CD4-positive, alpha-beta memory T cell (primary cell): ENCODE measurements at regions of chr13 and their contacts with region 1.

Region 1: DNA sequence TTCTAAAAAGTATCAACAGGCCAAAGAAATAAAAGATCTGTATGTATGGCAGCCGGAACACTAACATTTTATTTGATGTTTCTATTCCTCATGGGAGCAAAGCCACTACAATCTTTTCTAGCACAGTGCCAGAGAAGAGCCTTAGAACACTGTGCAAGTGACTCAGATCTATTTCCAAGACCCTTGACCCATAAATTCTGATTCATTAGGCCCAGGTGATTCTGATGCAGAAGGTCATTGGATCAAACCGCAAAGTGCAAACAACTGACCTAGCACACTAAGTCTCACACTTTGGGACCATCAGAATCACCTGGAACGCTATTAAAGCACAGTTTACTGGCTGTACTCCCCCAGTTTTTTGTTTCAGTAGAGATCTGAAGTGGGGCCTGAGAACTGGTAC is 87.6 kb downstream of the MYCBP2 start:
- DNase-seq: no peak
- H3K4me3 ChIP-seq: no peak overlapping the region
- H3K4me3 Mint-ChIP-seq: no peak overlapping the region
- H3K27ac ChIP-seq: no peak overlapping the region
- H3K27ac Mint-ChIP-seq: peak overlapping the region in 2 of 7 donors; percentile 59 to 60
- H3K4me1 ChIP-seq: no peaks in the 10 kb centered on the region
- H3K4me1 Mint-ChIP-seq: peaks cover 6 to 11% (median 8%) of the 10 kb centered on the region in 4 donors
- H3K27me3 ChIP-seq: no peaks in the 10 kb centered on the region
- H3K27me3 Mint-ChIP-seq: no peaks in the 10 kb centered on the region

Region 2: DNA sequence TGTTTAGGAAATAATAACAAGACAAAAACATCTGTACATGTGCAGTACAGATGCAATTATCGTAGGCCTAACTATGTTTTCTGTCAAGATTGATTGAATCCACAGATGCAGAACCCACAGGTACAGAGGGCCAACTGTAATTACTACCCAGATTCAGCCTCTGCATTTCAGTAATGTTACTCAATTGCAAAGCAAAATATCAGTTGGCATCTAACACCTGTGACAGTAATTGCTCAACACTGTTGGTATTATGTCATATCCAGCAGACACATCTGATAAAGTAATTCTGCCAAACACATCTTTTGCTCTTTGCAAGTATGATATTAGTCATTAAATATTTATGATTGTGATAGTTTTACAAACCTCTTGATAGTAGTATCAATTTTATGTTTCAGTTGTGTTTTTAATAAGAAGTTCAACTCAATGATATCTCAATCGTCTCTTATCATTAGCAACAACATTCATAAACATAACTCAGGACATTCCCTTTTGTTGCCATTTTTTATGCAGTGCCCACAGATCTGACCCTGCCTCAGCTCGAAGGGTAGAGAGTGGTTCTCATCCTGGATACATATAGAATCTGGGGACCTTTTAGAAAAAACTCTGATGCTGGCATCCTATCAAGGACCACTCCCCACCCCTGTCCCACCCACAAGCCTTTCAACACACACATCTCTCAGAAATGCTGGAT is 17.2 kb before region 1 on chr13:
- CTCF ChIA-PET with region 1: no interaction called
- POLR2A ChIA-PET with region 1: no interaction called
- intact Hi-C with region 1: loop called (anchors 2 kb)
- DNase-seq: no peak
- H3K4me3 ChIP-seq: no peak overlapping the region
- H3K4me3 Mint-ChIP-seq: no peak overlapping the region
- H3K27ac ChIP-seq: no peak overlapping the region
- H3K27ac Mint-ChIP-seq: peak overlapping the region in 1 of 7 donors; percentile 25
- H3K4me1 ChIP-seq: peaks cover 8% of the 10 kb centered on the region
- H3K4me1 Mint-ChIP-seq: peaks cover 15 to 28% (median 19%) of the 10 kb centered on the region in 4 donors
- H3K27me3 ChIP-seq: no peaks in the 10 kb centered on the region
- H3K27me3 Mint-ChIP-seq: no peaks in the 10 kb centered on the region

Region 3: GRCh38 chr13:77492982-77493381 is 253.7 kb after region 1 on chr13:
- CTCF ChIA-PET with region 1: no interaction called
- POLR2A ChIA-PET with region 1: no interaction called
- intact Hi-C with region 1: no loop called
- DNase-seq: peak in 2 of 5 donors; percentile 5 to 7
- H3K4me3 ChIP-seq: no peak overlapping the region
- H3K4me3 Mint-ChIP-seq: no peak overlapping the region
- H3K27ac ChIP-seq: no peak overlapping the region
- H3K27ac Mint-ChIP-seq: no peak overlapping the region
- H3K4me1 ChIP-seq: no peaks in the 10 kb centered on the region
- H3K4me1 Mint-ChIP-seq: no peaks in the 10 kb centered on the region
- H3K27me3 ChIP-seq: no peaks in the 10 kb centered on the region
- H3K27me3 Mint-ChIP-seq: peaks cover 0 to 6% of the 10 kb centered on the region in 2 donors

Region 4: DNA sequence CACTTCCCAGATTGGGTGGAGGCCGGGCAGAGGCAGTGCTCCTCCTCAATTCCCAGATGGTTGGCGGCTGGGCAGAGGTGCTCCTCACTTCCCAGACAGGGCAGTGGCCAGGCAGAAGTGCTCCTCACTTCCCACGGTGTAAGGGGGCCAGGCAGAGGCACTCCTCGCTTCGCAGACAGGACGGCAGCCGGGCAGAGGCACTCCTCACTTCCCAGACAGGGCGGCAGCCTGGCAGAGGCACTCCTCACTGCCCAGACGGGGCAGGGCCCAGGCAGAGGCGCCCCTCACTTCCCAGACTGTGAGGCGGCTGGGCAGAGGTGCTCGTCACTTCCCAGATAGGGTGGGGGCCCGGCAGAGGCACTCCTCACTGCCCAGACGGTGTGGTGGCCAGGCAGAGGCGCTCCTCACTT is 421.5 kb after region 1 on chr13:
- CTCF ChIA-PET with region 1: no interaction called
- POLR2A ChIA-PET with region 1: no interaction called
- intact Hi-C with region 1: no loop called
- DNase-seq: no peak
- H3K4me3 ChIP-seq: no peak overlapping the region
- H3K4me3 Mint-ChIP-seq: no peak overlapping the region
- H3K27ac ChIP-seq: no peak overlapping the region
- H3K27ac Mint-ChIP-seq: no peak overlapping the region
- H3K4me1 ChIP-seq: no peaks in the 10 kb centered on the region
- H3K4me1 Mint-ChIP-seq: no peaks in the 10 kb centered on the region
- H3K27me3 ChIP-seq: no peaks in the 10 kb centered on the region
- H3K27me3 Mint-ChIP-seq: peaks cover 4 to 5% of the 10 kb centered on the region in 2 donors